ENCODE measurements at regions of chr17 and their contacts with region 1.

Region 1: DNA sequence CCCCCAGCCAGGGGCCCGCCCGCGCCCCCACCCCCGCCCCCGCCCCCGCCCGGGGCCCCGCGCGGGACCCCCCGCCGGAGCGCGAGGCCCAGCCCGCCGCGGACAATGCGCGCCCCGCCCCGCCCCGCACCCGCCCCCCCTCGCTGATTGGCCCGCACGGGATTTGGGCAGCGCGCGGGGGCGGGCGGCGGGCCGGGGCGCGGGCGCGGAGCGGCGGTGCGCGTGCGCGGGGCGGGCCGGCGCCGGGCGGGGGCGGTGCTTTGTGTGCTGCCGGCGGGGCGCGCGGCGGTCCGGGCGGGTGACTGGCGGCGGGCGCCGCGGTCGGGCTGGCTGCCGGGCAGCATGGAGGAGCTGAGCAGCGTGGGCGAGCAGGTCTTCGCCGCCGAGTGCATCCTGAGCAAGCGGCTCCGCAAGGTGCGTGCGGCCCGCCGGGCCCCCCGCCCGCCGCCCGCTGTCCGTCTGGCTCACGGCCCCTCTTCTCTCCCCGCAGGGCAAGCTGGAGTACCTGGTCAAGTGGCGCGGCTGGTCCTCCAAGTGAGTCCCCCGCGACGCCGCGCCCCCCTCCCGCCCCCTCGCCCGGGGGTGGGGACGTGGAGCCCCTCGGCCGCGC is at the start of gene CBX2:
- DNase-seq: peak; percentile 58 to 93 (median 75)
- ATAC-seq: peak; percentile 88
- H3K4me3 ChIP-seq: peak within 1 kb of the TSS; percentile 41
- H3K4me3 Mint-ChIP-seq: peak within 1 kb of the TSS; percentile 85
- H3K27ac ChIP-seq: no peak within 1 kb of the TSS
- H3K27ac Mint-ChIP-seq: peak within 1 kb of the TSS; percentile 27
- H3K4me1 ChIP-seq: peaks cover 26% of the 10 kb centered on the region
- H3K4me1 Mint-ChIP-seq: peaks cover 27% of the 10 kb centered on the region
- H3K27me3 ChIP-seq: peaks cover 61 to 82% of the 10 kb centered on the region in 2 experiments
- H3K27me3 Mint-ChIP-seq: peaks cover 91% of the 10 kb centered on the region
- CTCF ChIP-seq: no peak
- total RNA-seq, gene CBX2: 0.31 TPM in 1 of 2 experiments, not detected in the other

Region 2: DNA sequence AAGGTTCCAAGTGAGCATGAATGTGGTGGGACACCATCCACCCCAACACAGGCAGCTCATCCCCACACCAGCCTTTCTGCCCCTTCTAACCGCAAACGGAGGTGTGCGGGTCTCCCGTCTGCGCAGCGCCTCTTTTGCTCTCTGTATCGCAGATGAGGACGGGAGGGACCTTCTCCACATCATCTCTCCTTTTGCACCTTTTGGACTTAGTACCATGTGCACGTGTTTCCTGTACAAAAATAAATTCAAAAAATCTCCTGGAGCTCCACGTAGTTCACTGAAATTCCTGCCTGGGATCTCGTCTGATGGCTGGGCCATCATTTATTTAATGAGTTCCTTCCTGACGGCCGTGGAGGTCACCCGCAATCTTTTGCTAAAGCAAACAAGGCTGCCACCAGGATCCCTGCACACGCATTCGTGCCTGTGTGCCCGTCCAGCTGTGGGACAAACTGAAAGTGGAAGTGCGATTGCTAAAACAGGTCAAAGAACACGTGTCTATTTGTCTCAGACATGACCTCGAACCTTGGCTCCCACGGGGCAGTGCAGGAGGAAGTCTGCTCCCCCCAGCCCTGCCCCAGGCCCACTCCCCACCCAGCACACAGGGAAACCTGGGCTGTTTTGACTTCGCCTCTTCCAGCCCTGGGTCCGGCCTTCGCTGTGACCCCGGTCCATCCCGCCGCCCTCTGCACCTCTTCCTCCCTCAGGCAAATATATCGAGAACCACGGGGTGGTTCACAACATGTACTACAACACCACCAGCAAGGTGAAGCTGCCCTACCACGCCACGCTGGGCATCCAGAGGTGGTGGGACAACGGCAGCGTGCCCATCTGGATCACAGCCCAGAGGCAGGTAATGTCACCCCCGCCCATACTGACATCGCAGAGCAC is 45.0 kb before region 1 on chr17:
- CTCF ChIA-PET with region 1: no interaction called
- POLR2A ChIA-PET with region 1: no interaction called
- intact Hi-C with region 1: no loop called
- DNase-seq: peak in 4 of 14 experiments; percentile 13 to 73 (median 44)
- ATAC-seq: no peak
- H3K4me3 ChIP-seq: no peak overlapping the region
- H3K4me3 Mint-ChIP-seq: no peak overlapping the region
- H3K27ac ChIP-seq: no peak overlapping the region
- H3K27ac Mint-ChIP-seq: no peak overlapping the region
- H3K4me1 ChIP-seq: peaks cover 31% of the 10 kb centered on the region
- H3K4me1 Mint-ChIP-seq: peaks cover 11% of the 10 kb centered on the region
- H3K27me3 ChIP-seq: peaks cover 0 to 6% of the 10 kb centered on the region in 2 experiments
- H3K27me3 Mint-ChIP-seq: peaks cover 15% of the 10 kb centered on the region
- CTCF ChIP-seq: no peak

Region 3: DNA sequence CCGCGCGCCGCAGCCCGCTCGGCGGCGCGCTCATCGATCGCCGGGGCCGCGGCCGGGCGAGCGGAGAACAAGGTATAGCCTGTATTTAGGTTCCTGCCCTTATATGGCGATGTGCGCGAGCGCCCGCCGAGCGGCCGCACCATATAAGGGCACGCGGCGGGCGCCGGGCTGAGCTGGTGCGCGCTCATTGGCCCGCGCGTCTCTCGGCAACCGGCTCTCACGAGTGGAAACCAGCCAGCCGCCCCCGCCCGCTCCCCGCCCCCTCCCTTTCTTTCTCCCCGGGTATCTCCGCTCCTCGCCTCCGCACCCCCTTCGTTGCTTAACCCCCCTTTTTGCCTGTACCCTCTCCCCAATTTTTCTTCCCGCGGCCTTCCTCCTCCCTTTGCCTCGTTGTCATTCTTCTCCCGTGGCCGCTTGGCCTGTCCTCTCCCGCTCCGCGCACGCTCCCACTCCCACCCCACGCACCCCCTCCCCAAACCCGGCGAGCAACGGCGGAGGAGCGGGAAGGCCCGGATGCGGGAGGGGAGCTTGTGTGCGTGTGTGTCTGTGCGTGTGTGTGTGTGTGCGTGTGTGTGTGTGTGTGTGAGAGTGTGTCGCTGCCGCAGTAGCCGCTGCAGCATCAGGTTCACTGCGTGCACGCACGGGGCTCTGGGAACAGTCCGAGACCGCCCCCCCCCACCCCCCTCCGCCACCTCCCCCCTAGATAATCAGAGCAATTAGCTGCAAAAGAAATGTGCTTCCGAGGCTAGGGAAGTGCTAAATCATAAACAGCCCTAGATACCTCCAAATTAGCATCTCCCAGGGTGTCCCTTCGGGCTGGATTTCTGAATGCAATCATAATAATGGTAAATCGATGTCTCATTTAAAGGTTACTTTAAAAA is 32.4 kb after region 1 on chr17:
- CTCF ChIA-PET with region 1: no interaction called
- POLR2A ChIA-PET with region 1: no interaction called
- intact Hi-C with region 1: loop called in 1 of 2 experiments (anchors 1 kb)
- DNase-seq: peak; percentile 48 to 93 (median 74)
- ATAC-seq: peak; percentile 92
- H3K4me3 ChIP-seq: no peak overlapping the region
- H3K4me3 Mint-ChIP-seq: peak overlapping the region; percentile 62
- H3K27ac ChIP-seq: no peak overlapping the region
- H3K27ac Mint-ChIP-seq: no peak overlapping the region
- H3K4me1 ChIP-seq: peaks cover 65% of the 10 kb centered on the region
- H3K4me1 Mint-ChIP-seq: peaks cover 36% of the 10 kb centered on the region
- H3K27me3 ChIP-seq: peaks cover 81 to 83% of the 10 kb centered on the region in 2 experiments
- H3K27me3 Mint-ChIP-seq: peaks cover 77% of the 10 kb centered on the region
- CTCF ChIP-seq: no peak